Endothelial cell of umbilical vein (primary cell): ENCODE measurements at regions of chr7 and their contacts with region 1.

Region 1: DNA sequence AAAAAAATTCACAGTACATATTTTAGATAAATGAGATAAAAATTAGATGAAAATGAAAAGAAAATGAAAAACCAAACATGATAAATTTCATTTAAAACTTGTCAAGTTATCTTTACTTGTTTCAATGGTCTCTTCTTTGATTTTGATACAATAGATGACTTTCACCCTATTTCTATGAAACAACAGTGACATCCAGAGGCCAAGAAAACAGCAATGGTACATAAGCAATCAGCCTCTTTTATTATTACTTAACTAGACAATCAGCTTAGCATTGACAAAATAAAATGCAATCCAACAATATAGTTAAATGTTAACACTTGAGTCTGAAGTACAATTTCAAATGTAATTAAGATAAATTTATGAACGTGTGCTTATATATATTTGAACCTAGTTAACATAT is 74.8 kb upstream of the GPR37 start:
- DNase-seq: peak; percentile 74
- H3K4me3 ChIP-seq: no peak overlapping the region
- H3K27ac ChIP-seq: no peak overlapping the region
- H3K4me1 ChIP-seq: peaks cover 17% of the 10 kb centered on the region
- H3K27me3 ChIP-seq: no peaks in the 10 kb centered on the region
- CTCF ChIP-seq: peak in 1 of 2 donors; percentile 5
- POLR2A ChIP-seq: no peak

Region 2: DNA sequence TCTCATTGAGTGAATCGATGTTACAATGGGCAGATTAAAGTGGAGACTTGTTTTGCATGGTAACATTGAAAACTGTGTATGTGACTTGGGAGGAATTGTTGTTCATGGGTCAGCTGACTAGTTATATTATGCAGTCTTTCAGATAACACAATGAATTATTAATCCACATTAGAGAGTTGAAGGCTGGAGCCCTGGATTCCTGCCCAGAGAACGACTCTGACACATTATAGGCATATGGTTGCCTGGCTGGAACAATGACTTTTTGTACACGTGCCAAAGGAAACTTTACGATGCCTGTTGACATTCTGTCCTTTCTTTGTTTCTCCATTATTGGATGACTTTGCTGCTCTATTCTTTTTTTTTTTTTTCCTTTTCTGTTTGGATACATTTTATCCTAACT is 755.3 kb before region 1 on chr7:
- CTCF ChIA-PET with region 1: no interaction called
- POLR2A ChIA-PET with region 1: no interaction called
- dilution Hi-C with region 1: no loop called
- intact Hi-C with region 1: loop called (anchors 5 kb)
- DNase-seq: peak; percentile 99
- H3K4me3 ChIP-seq: no peak overlapping the region
- H3K27ac ChIP-seq: peak overlapping the region; percentile 38
- H3K4me1 ChIP-seq: peaks cover 23% of the 10 kb centered on the region
- H3K27me3 ChIP-seq: no peaks in the 10 kb centered on the region
- CTCF ChIP-seq: no peak
- POLR2A ChIP-seq: no peak

Region 3: GRCh38 chr7:124459101-124460055 is 381.1 kb before region 1 on chr7:
- CTCF ChIA-PET with region 1: no interaction called
- POLR2A ChIA-PET with region 1: no interaction called
- dilution Hi-C with region 1: no loop called
- intact Hi-C with region 1: no loop called
- DNase-seq: no peak
- H3K4me3 ChIP-seq: no peak overlapping the region
- H3K27ac ChIP-seq: no peak overlapping the region
- H3K4me1 ChIP-seq: no peaks in the 10 kb centered on the region
- H3K27me3 ChIP-seq: no peaks in the 10 kb centered on the region
- CTCF ChIP-seq: no peak
- POLR2A ChIP-seq: no peak